ENCODE measurements at regions of chr1 and their contacts with region 1.

Region 1: GRCh38 chr1:34865981-34866761 is 6.6 kb upstream of the SMIM12 start:
- DNase-seq: peak; percentile 89 to 96
- ATAC-seq: peak; percentile 83 to 86 (median 86)
- H3K4me3 ChIP-seq: peak overlapping the region; percentile 76
- H3K4me3 Mint-ChIP-seq: peak overlapping the region; percentile 85
- H3K27ac ChIP-seq: peak overlapping the region; percentile 86
- H3K27ac Mint-ChIP-seq: peak overlapping the region; percentile 59 to 73
- H3K4me1 ChIP-seq: peaks cover 44% of the 10 kb centered on the region
- H3K4me1 Mint-ChIP-seq: peaks cover 34 to 41% of the 10 kb centered on the region in 2 donors
- H3K27me3 ChIP-seq: no peaks in the 10 kb centered on the region
- H3K27me3 Mint-ChIP-seq: peaks cover 2 to 3% of the 10 kb centered on the region in 2 donors
- CTCF ChIP-seq: peak; percentile 99

Region 2: GRCh38 chr1:34786521-34787325 is 79.4 kb before region 1 on chr1:
- intact Hi-C with region 1: loop called (anchors 1 kb)
- DNase-seq: peak; percentile 45 to 81
- ATAC-seq: peak; percentile 79 to 94 (median 89)
- H3K4me3 ChIP-seq: no peak overlapping the region
- H3K4me3 Mint-ChIP-seq: no peak overlapping the region
- H3K27ac ChIP-seq: no peak overlapping the region
- H3K27ac Mint-ChIP-seq: no peak overlapping the region
- H3K4me1 ChIP-seq: peaks cover 9% of the 10 kb centered on the region
- H3K4me1 Mint-ChIP-seq: peaks cover 0 to 7% of the 10 kb centered on the region in 2 donors
- H3K27me3 ChIP-seq: peaks cover 10% of the 10 kb centered on the region
- H3K27me3 Mint-ChIP-seq: peaks cover 29 to 33% of the 10 kb centered on the region in 2 donors
- CTCF ChIP-seq: peak; percentile 73